ENCODE measurements at regions of chr5 and their contacts with region 1.

Region 1: GRCh38 chr5:35926389-35927051 is 11.9 kb downstream of the CAPSL start:
- DNase-seq: peak in 3 of 10 donors; percentile 19 to 64 (median 28)
- H3K4me3 ChIP-seq: peak overlapping the region in 52 of 59 donors; percentile 4 to 62 (median 42)
- H3K27ac ChIP-seq: peak overlapping the region in 1 of 59 donors; percentile 56
- H3K27me3 ChIP-seq: peaks cover 0 to 13% (median 0%) of the 10 kb centered on the region in 45 donors
- CTCF ChIP-seq: peak; percentile 69 to 98 (median 92)

Region 2: DNA sequence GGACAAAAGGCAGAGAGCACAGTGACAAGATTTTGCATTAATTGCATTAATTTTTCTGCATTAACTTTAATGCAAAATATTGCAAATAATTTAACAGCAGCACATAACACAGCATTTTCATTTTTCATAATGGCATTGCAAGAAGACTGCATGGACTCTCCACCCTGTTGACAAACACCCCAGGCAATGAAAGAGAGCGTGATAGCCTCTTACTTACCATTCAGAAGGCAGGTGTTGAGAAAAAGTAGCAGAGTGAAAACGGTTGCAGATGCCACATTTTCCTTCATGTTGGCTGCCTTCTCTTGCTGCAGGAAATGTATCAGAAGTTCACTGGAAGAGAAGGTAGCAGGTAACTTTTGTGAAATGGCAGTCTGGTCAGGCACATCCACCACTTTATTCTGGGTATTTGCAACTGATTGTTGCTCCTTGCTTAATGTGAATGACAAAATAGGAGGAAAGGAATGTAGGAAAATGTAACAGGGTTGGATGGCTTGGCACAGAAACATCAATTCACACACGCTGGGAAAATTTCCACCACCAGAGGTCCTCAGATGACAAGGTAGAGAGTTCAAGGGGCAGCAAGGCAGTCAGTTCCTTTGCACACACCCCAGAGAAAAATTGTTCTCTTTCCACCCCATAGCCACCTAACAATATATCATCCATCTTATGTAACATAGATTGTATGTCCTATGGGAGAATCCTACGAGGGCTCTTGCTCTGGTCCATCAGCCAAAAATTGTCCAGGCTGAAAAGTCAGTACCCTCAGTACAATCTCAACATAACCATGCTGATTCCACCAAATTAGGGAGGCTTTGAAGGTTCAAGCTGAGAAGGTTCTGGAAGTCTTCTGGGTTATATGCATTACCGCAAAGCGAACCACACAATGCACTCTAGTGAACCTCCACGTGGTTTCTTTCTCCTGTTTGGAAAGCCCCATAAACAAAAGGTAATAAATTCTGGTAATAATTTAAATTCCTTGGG is 836.9 kb before region 1 on chr5:
- intact Hi-C with region 1: loop called (anchors 2 to 5 kb)
- DNase-seq: peak in 8 of 10 donors; percentile 27 to 69 (median 45)
- H3K4me3 ChIP-seq: no peak overlapping the region
- H3K27ac ChIP-seq: no peak overlapping the region
- H3K27me3 ChIP-seq: no peaks in the 10 kb centered on the region
- CTCF ChIP-seq: peak; percentile 50 to 83 (median 71)

Region 3: GRCh38 chr5:35617435-35618303 is 308.9 kb before region 1 on chr5 and contains the start of gene SPEF2:
- intact Hi-C with region 1: loop called (anchors 1 to 2 kb)
- DNase-seq: peak; percentile 65 to 88 (median 76)
- H3K4me3 ChIP-seq: peak within 1 kb of the TSS; percentile 48 to 97 (median 78)
- H3K27ac ChIP-seq: peak within 1 kb of the TSS in 6 of 59 donors; percentile 17 to 69 (median 55)
- H3K27me3 ChIP-seq: no peaks in the 10 kb centered on the region
- CTCF ChIP-seq: peak; percentile 55 to 90 (median 80)
- total RNA-seq, gene SPEF2: 12.4 to 35.5 (median 23.3) TPM

Region 4: GRCh38 chr5:35651002-35651756 is 275.3 kb before region 1 on chr5:
- intact Hi-C with region 1: loop called (anchors 2 to 10 kb)
- DNase-seq: peak in 2 of 10 donors; percentile 14 to 29
- H3K4me3 ChIP-seq: no peak overlapping the region
- H3K27ac ChIP-seq: no peak overlapping the region
- H3K27me3 ChIP-seq: no peaks in the 10 kb centered on the region
- CTCF ChIP-seq: peak in 54 of 56 donors; percentile 13 to 76 (median 56)

Region 5: GRCh38 chr5:35777358-35778087 is 149.0 kb before region 1 on chr5:
- intact Hi-C with region 1: loop called (anchors 1 to 5 kb)
- DNase-seq: peak in 5 of 10 donors; percentile 19 to 71 (median 44)
- H3K4me3 ChIP-seq: no peak overlapping the region
- H3K27ac ChIP-seq: no peak overlapping the region
- H3K27me3 ChIP-seq: no peaks in the 10 kb centered on the region
- CTCF ChIP-seq: peak; percentile 46 to 83 (median 69)

Measured in dorsolateral prefrontal cortex (tissue), 120 donors.